Activated CD4-positive, alpha-beta T cell treated with anti-CD3 and anti-CD28 coated beads, Interleukin-2, amount 10 ng/mL, durations not matched to agents 24 days and 14 days (primary cell): ENCODE measurements at regions of chr13 and their contacts with region 1.

Region 1: GRCh38 chr13:28268800-28269223 is 130.5 kb downstream of the PAN3 start:
- DNase-seq: peak; percentile 63
- H3K4me3 Mint-ChIP-seq: no peak overlapping the region
- H3K27ac Mint-ChIP-seq: peak overlapping the region; percentile 55
- H3K4me1 Mint-ChIP-seq: peaks cover 13% of the 10 kb centered on the region
- H3K27me3 Mint-ChIP-seq: no peaks in the 10 kb centered on the region

Region 2: GRCh38 chr13:28204690-28205443 is 63.9 kb before region 1 on chr13:
- intact Hi-C with region 1: loop called (anchors 1 kb)
- DNase-seq: no peak
- H3K4me3 Mint-ChIP-seq: peak overlapping the region; percentile 28
- H3K27ac Mint-ChIP-seq: peak overlapping the region; percentile 74
- H3K4me1 Mint-ChIP-seq: peaks cover 17% of the 10 kb centered on the region
- H3K27me3 Mint-ChIP-seq: no peaks in the 10 kb centered on the region

Region 3: DNA sequence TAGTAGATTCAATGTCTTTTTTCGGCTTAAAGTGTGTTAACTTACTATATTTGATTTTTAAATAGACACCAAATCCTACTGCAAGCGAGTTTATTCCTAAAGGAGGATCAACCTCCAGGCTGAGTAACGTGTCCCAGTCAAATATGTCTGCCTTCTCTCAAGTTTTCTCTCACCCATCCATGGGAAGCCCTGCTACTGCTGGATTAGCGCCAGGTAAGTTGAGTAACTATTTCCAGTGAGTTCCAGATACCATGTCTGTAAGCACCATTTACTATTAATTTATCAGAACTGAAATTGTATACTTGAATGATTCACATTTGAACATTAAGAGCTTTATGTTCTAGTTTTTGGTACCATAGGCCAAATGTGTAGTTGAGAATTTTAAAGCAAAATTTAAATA is 48.6 kb before region 1 on chr13:
- intact Hi-C with region 1: no loop called
- DNase-seq: no peak
- H3K4me3 Mint-ChIP-seq: no peak overlapping the region
- H3K27ac Mint-ChIP-seq: no peak overlapping the region
- H3K4me1 Mint-ChIP-seq: peaks cover 1% of the 10 kb centered on the region
- H3K27me3 Mint-ChIP-seq: no peaks in the 10 kb centered on the region

Region 4: DNA sequence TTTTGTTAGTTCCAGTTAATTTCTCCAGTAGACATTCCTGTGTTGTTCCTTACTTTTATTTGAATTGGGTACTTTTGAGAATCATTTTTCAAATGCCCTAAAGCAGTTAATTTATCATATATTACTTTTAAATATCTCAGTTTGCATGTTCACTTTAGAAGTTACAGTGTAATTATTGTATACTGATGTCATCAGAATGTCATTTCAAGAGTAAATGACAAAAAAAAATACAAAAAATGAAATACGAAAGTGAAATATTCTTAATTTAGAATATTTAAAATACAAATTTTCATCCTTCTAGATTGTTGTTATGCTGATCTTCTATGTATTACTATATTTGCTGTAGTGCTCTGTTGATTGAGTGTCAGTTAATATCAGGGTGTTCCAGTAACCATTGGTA is 16.3 kb before region 1 on chr13:
- intact Hi-C with region 1: loop called (anchors 2 kb)
- DNase-seq: no peak
- H3K4me3 Mint-ChIP-seq: no peak overlapping the region
- H3K27ac Mint-ChIP-seq: no peak overlapping the region
- H3K4me1 Mint-ChIP-seq: peaks cover 21% of the 10 kb centered on the region
- H3K27me3 Mint-ChIP-seq: no peaks in the 10 kb centered on the region